ENCODE measurements at regions of chr3 and their contacts with region 1.

Region 1: GRCh38 chr3:14921078-14921616 is 26.2 kb upstream of the NR2C2 start:
- DNase-seq: peak; percentile 83 to 91 (median 88)
- ATAC-seq: peak; percentile 87
- H3K4me3 ChIP-seq: no peak overlapping the region
- H3K27ac ChIP-seq: no peak overlapping the region
- H3K4me1 ChIP-seq: peaks cover 0 to 3% of the 10 kb centered on the region in 2 experiments; a peak in 2 of 5 replicates
- H3K27me3 ChIP-seq: peaks cover 47 to 62% of the 10 kb centered on the region in 2 experiments
- CTCF ChIP-seq: peak; percentile 95 to 98 (median 98)
- EP300 ChIP-seq: no peak
- POLR2A ChIP-seq: no peak
- RAD21 ChIP-seq: peak; percentile 97 to 98

Region 2: GRCh38 chr3:13895155-13896105 is 1025.7 kb before region 1 on chr3:
- CTCF ChIA-PET with region 1: no interaction called
- POLR2A ChIA-PET with region 1: no interaction called
- in situ Hi-C with region 1: no loop called
- intact Hi-C with region 1: loop called (anchors 5 kb)
- DNase-seq: peak; percentile 92 to 96 (median 94)
- ATAC-seq: peak; percentile 99
- H3K4me3 ChIP-seq: peak overlapping the region; percentile 42
- H3K27ac ChIP-seq: no peak overlapping the region; the same call in 1 of the 3 replicates
- H3K4me1 ChIP-seq: peaks cover 16 to 25% of the 10 kb centered on the region in 2 experiments
- H3K27me3 ChIP-seq: peaks cover 0 to 7% of the 10 kb centered on the region in 2 experiments; a peak in 3 of 5 replicates
- CTCF ChIP-seq: no peak
- EP300 ChIP-seq: no peak
- POLR2A ChIP-seq: peak; percentile 66
- RAD21 ChIP-seq: no peak

Region 3: GRCh38 chr3:14508961-14509795 is 412.0 kb before region 1 on chr3:
- CTCF ChIA-PET with region 1: interaction called, 13 read pairs
- POLR2A ChIA-PET with region 1: no interaction called
- in situ Hi-C with region 1: loop called (anchors 25 kb)
- intact Hi-C with region 1: loop called (anchors 1 kb)
- DNase-seq: peak; percentile 84 to 96 (median 94)
- ATAC-seq: peak; percentile 89
- H3K4me3 ChIP-seq: no peak overlapping the region
- H3K27ac ChIP-seq: no peak overlapping the region
- H3K4me1 ChIP-seq: peaks cover 0 to 36% of the 10 kb centered on the region in 2 experiments; a peak in 2 of 5 replicates
- H3K27me3 ChIP-seq: peaks cover 8 to 56% of the 10 kb centered on the region in 2 experiments; a peak in 4 of 5 replicates
- CTCF ChIP-seq: peak; percentile 87 to 90 (median 89)
- EP300 ChIP-seq: no peak
- POLR2A ChIP-seq: no peak
- RAD21 ChIP-seq: peak; percentile 55 to 81

Region 4: DNA sequence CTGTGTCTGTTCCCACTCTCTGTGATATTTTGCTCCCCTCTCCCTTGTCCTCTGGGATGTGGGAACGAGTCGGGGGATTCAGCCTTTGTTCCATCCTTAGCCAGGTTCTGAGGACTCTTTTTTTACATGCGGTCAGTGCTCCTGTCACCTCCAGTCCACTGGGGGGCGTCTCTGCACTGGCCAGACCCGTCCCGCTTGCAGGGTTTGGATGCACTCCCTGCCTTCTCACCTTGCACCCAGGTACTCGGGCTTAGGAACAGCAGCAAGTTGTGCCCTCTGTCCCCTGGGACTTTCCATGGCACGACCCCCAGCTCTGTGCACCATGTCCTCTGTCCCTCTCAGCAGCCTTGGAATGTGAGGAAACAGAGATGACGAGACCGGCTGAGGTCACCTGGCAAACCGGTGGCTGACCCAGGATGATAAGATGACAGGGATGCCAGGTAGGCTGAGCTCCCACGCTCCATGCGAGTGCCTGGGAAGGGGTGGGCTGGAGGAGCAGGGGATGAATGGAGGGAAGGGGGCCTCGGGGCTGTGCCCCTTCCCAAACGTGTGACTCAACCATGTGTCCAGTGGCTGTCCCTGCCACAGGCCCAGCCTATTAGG is 129.7 kb before region 1 on chr3:
- CTCF ChIA-PET with region 1: interaction called, 20 read pairs
- POLR2A ChIA-PET with region 1: interaction called, 4 read pairs
- in situ Hi-C with region 1: loop called (anchors 5 kb)
- intact Hi-C with region 1: loop called (anchors 1 kb)
- DNase-seq: peak; percentile 76 to 83 (median 82)
- ATAC-seq: peak; percentile 96
- H3K4me3 ChIP-seq: no peak overlapping the region
- H3K27ac ChIP-seq: no peak overlapping the region
- H3K4me1 ChIP-seq: no peaks in the 10 kb centered on the region; a peak in 2 of 5 replicates
- H3K27me3 ChIP-seq: peaks cover 16 to 59% of the 10 kb centered on the region in 2 experiments; a peak in 3 of 5 replicates
- CTCF ChIP-seq: peak; percentile 87 to 95 (median 94)
- EP300 ChIP-seq: no peak
- POLR2A ChIP-seq: no peak
- RAD21 ChIP-seq: peak; percentile 77 to 96

Region 5: GRCh38 chr3:15042936-15043335 is 121.8 kb after region 1 on chr3:
- CTCF ChIA-PET with region 1: no interaction called
- POLR2A ChIA-PET with region 1: no interaction called
- in situ Hi-C with region 1: no loop called
- intact Hi-C with region 1: loop called (anchors 1 kb)
- DNase-seq: no peak
- ATAC-seq: no peak
- H3K4me3 ChIP-seq: no peak overlapping the region
- H3K27ac ChIP-seq: peak overlapping the region; percentile 42; the same call in 1 of the 3 replicates
- H3K4me1 ChIP-seq: peaks cover 3 to 17% of the 10 kb centered on the region in 2 experiments; a peak in 4 of 5 replicates
- H3K27me3 ChIP-seq: no peaks in the 10 kb centered on the region
- CTCF ChIP-seq: no peak
- EP300 ChIP-seq: no peak; the same call in 1 of the 2 replicates
- POLR2A ChIP-seq: no peak
- RAD21 ChIP-seq: no peak

Region 6: DNA sequence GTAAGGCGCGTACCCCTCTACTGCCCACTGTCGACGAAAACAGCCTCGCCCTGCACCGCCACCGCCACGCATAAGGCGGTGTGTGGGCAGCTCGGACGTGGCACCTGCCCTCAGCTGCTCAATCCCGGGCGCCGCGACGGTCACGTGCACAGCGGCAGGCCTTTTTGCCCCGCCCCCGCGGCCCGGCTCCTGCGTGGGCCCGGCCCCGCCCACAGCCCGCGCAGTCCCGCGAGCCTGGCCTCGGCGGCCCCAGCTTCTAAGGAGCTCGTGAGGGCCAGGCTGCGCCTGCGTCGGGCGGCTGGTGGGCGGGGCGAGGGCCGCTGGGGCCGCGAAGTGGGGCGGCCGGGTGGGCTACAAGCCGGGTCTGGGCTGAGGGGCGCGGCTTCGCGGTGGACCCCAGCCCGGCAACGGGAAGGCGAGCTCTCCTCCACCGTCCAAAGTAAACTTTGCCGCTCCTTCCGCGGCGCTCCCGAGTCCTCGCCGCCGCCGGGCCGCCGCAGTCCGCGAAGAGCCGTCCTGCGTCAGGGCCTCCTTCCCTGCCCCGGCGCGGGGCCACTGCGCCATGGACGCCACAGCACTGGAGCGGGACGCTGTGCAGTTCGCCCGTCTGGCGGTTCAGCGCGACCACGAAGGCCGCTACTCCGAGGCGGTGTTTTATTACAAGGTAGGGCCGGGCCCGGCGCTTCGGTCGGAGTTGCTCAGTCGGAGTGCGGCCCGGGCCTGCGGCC is 285.0 kb after region 1 on chr3 and contains the start of gene CAPN7:
- CTCF ChIA-PET with region 1: interaction called, 3 read pairs
- POLR2A ChIA-PET with region 1: no interaction called
- in situ Hi-C with region 1: no loop called
- intact Hi-C with region 1: loop called (anchors 10 kb)
- DNase-seq: peak; percentile 97 to 98 (median 98)
- ATAC-seq: peak; percentile 95
- H3K4me3 ChIP-seq: peak within 1 kb of the TSS; percentile 90
- H3K27ac ChIP-seq: peak within 1 kb of the TSS; percentile 89
- H3K4me1 ChIP-seq: peaks cover 14% of the 10 kb centered on the region in 2 experiments; a peak in 3 of 5 replicates
- H3K27me3 ChIP-seq: no peaks in the 10 kb centered on the region
- CTCF ChIP-seq: peak; percentile 41 to 52 (median 45); a peak in 5 of 6 replicates
- EP300 ChIP-seq: no peak
- POLR2A ChIP-seq: peak; percentile 84
- RAD21 ChIP-seq: peak in 1 of 2 experiments; percentile 31; a peak in 1 of 4 replicates
- polyA plus RNA-seq, gene CAPN7: 6.5 to 10.0 TPM

Region 7: DNA sequence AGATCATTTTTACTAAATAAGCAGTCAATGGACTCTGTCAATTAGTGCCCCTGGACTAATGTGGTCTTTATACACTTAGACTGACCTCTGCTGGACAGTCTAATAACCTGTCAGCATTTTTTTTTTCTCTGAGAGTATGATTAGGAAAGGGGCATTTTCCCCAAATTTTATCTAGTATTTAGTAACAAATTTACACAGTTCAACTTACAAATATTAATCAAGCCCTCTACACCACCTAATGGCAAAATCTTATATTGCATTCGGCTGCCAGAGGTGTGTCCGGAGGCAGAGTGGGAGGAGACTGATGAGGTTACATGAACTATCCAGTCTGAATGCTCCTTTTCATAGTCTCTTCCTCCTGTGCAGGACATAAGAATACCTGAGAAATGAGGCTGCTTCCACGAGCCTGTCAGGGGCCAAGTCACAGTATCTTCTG is 636.4 kb after region 1 on chr3:
- CTCF ChIA-PET with region 1: no interaction called
- POLR2A ChIA-PET with region 1: no interaction called
- in situ Hi-C with region 1: no loop called
- intact Hi-C with region 1: loop called (anchors 5 kb)
- DNase-seq: peak; percentile 52 to 81 (median 64)
- ATAC-seq: peak; percentile 98
- H3K4me3 ChIP-seq: no peak overlapping the region
- H3K27ac ChIP-seq: no peak overlapping the region; the same call in 2 of the 3 replicates
- H3K4me1 ChIP-seq: peaks cover 0 to 8% of the 10 kb centered on the region in 2 experiments; a peak in 2 of 5 replicates
- H3K27me3 ChIP-seq: no peaks in the 10 kb centered on the region
- CTCF ChIP-seq: peak; percentile 43 to 73 (median 68)
- EP300 ChIP-seq: no peak
- POLR2A ChIP-seq: no peak
- RAD21 ChIP-seq: peak; percentile 77 to 83